ENCODE measurements at regions of chr15 and their contacts with region 1.

Region 1: GRCh38 chr15:76057332-76058000 is 2.3 kb upstream of the TMEM266 start:
- DNase-seq: peak; percentile 14
- H3K4me3 ChIP-seq: no peak overlapping the region
- H3K27ac ChIP-seq: no peak overlapping the region
- H3K4me1 ChIP-seq: peaks cover 7 to 21% (median 16%) of the 10 kb centered on the region in 4 donors
- H3K27me3 ChIP-seq: peaks cover 77% of the 10 kb centered on the region
- CTCF ChIP-seq: peak; percentile 55 to 74 (median 71)
- EP300 ChIP-seq: no peak
- POLR2A ChIP-seq: no peak

Region 2: DNA sequence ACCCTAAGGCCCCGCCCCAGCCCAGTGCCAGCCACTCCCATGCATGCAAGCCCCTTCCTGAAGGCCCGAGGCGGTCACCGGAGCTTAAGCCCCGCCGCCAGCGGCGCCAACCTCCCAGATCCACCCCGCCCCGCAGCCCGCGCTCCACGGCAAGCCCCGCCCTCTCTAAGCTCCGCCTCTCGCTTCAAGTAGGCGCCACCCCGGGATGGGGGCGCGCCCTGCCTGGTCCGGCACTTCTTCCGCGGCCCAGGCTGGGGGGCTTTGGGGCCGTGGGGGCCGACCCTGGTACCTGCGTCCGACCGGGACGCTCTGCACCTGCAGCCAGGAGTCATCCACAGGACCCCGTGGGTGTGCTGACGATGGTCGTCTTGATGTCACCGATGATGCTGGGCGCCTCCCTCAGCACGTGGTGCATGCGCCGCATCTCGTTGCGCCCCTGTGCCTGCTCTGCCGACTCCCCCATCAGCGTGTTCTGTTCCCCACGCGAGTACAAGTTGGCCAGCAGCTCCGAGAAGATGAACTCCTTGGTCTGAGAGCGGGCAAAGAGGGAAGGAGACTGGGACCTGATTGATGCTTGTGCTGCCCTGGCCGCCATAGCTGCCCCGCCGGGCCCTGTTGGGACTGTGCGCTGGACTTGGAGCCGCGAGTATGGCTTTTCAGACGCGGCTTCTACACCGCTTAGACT is 318.7 kb before region 1 on chr15:
- in situ Hi-C with region 1: no loop called
- intact Hi-C with region 1: no loop called
- DNase-seq: peak; percentile 97
- H3K4me3 ChIP-seq: peak overlapping the region; percentile 63 to 96 (median 64)
- H3K27ac ChIP-seq: peak overlapping the region; percentile 66 to 84 (median 77)
- H3K4me1 ChIP-seq: peaks cover 0 to 12% (median 8%) of the 10 kb centered on the region in 4 donors
- H3K27me3 ChIP-seq: no peaks in the 10 kb centered on the region
- CTCF ChIP-seq: no peak
- EP300 ChIP-seq: no peak
- POLR2A ChIP-seq: no peak

Region 3: GRCh38 chr15:76139368-76140073 is 82.1 kb after region 1 on chr15:
- in situ Hi-C with region 1: loop called in 2 of 4 experiments (anchors 10 kb)
- intact Hi-C with region 1: loop called (anchors 10 kb)
- DNase-seq: peak; percentile 76
- H3K4me3 ChIP-seq: no peak overlapping the region
- H3K27ac ChIP-seq: no peak overlapping the region
- H3K4me1 ChIP-seq: peaks cover 0 to 10% (median 5%) of the 10 kb centered on the region in 4 donors
- H3K27me3 ChIP-seq: peaks cover 8% of the 10 kb centered on the region
- CTCF ChIP-seq: peak; percentile 87 to 94 (median 90)
- EP300 ChIP-seq: no peak
- POLR2A ChIP-seq: no peak

Measured in transverse colon (tissue), 4 donors.